ENCODE measurements at regions of chr5 and their contacts with region 1.

Region 1: GRCh38 chr5:76422227-76422626 is 19.1 kb downstream of the IQGAP2 start:
- DNase-seq: no peak
- H3K4me3 ChIP-seq: no peak overlapping the region
- H3K4me3 Mint-ChIP-seq: no peak overlapping the region
- H3K27ac ChIP-seq: no peak overlapping the region
- H3K27ac Mint-ChIP-seq: peak overlapping the region in 5 of 7 donors; percentile 8 to 83 (median 39)
- H3K4me1 ChIP-seq: peaks cover 66% of the 10 kb centered on the region
- H3K4me1 Mint-ChIP-seq: peaks cover 51 to 86% (median 67%) of the 10 kb centered on the region in 4 donors
- H3K27me3 ChIP-seq: no peaks in the 10 kb centered on the region
- H3K27me3 Mint-ChIP-seq: no peaks in the 10 kb centered on the region

Region 2: DNA sequence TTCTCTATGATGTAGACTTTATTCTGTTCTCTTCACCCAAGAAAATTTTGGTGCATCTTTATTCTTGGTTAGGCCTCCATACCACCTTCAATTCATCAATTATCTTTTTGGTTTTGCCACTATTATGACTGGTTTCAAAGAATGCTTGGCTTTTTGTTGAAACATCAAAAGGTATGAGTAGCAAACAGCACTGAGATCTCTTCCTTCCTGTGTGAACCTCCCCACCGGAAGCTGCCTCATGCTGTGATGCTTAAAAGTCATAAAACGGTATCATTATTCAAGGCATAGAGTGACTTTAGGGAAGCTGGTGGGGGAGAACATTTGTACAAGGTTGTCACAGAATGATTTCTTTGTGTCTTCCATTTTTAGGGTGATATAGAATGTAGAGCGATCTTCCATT is 51.4 kb after region 1 on chr5:
- CTCF ChIA-PET with region 1: no interaction called
- POLR2A ChIA-PET with region 1: no interaction called
- intact Hi-C with region 1: loop called (anchors 5 kb)
- DNase-seq: peak; percentile 77 to 89 (median 81)
- H3K4me3 ChIP-seq: no peak overlapping the region
- H3K4me3 Mint-ChIP-seq: peak overlapping the region; percentile 42 to 76 (median 58)
- H3K27ac ChIP-seq: peak overlapping the region; percentile 23
- H3K27ac Mint-ChIP-seq: peak overlapping the region; percentile 90 to 99 (median 92)
- H3K4me1 ChIP-seq: peaks cover 90% of the 10 kb centered on the region
- H3K4me1 Mint-ChIP-seq: peaks cover 59 to 91% (median 77%) of the 10 kb centered on the region in 4 donors
- H3K27me3 ChIP-seq: no peaks in the 10 kb centered on the region
- H3K27me3 Mint-ChIP-seq: no peaks in the 10 kb centered on the region